ENCODE measurements at regions of chr14 and their contacts with region 1.

Region 1: GRCh38 chr14:24188251-24189058 is at the start of gene IPO4:
- DNase-seq: peak; percentile 81 to 97
- H3K4me3 ChIP-seq: peak within 1 kb of the TSS; percentile 50 to 83
- H3K27ac ChIP-seq: peak within 1 kb of the TSS; percentile 43 to 58
- H3K4me1 ChIP-seq: peaks cover 0 to 19% of the 10 kb centered on the region in 2 donors
- H3K27me3 ChIP-seq: no peaks in the 10 kb centered on the region
- CTCF ChIP-seq: no peak
- total RNA-seq, gene IPO4: 140 TPM

Region 2: GRCh38 chr14:24146978-24147760 is 41.3 kb before region 1 on chr14 and contains the start of gene RNF31:
- intact Hi-C with region 1: loop called (anchors 2 kb)
- DNase-seq: peak; percentile 95 to 99
- H3K4me3 ChIP-seq: peak within 1 kb of the TSS; percentile 76 to 100
- H3K27ac ChIP-seq: peak within 1 kb of the TSS; percentile 75 to 90
- H3K4me1 ChIP-seq: peaks cover 21 to 23% of the 10 kb centered on the region in 2 donors
- H3K27me3 ChIP-seq: no peaks in the 10 kb centered on the region
- CTCF ChIP-seq: no peak
- total RNA-seq, gene RNF31: 182 TPM